ENCODE measurements at regions of chr3 and their contacts with region 1.

Region 1: DNA sequence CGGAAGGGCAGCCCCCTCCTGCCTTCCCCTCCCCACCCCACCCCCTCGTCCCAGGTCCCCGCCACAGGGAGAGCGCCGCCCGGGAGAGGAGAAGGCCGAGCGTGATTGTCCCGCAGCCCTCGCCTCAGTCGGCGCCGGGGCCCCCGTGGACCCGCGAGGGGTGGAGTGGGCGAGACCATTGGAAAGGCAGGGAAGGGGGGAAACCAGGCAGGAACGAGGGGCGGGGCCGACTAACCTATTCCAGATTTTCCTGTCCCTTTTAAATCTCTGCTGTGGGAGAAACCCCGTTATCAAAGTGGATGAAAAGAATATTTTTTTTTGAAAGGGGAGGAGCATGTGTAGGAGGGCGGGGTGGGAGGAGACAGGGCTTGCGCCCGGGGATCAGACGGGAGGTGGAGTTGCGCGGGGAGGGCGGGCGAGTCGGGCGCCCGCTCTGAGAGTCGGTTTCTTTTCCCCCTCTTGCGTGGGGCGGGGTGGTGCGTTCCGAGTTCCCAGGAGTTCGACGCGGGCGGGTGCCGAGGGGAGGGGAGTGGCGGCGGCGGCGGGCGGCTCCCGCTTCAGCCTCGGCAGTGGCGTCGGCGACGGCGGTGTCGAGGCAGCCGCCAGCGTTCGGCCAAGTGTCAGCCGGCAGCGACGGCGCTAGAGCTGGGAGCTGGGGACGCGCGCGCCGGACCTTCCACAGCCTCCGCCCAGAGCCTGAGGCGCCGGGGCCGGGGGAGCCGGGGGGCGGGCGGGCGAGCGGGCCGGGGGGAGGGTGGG is at the start of gene NECTIN3:
- DNase-seq: peak; percentile 95
- H3K4me3 Mint-ChIP-seq: peak within 1 kb of the TSS; percentile 86
- H3K27ac Mint-ChIP-seq: peak within 1 kb of the TSS; percentile 89
- H3K4me1 Mint-ChIP-seq: peaks cover 12% of the 10 kb centered on the region
- H3K27me3 Mint-ChIP-seq: no peaks in the 10 kb centered on the region
- CTCF ChIP-seq: no peak
- total RNA-seq, gene NECTIN3: 110 and 128 TPM in 2 replicates

Region 2: DNA sequence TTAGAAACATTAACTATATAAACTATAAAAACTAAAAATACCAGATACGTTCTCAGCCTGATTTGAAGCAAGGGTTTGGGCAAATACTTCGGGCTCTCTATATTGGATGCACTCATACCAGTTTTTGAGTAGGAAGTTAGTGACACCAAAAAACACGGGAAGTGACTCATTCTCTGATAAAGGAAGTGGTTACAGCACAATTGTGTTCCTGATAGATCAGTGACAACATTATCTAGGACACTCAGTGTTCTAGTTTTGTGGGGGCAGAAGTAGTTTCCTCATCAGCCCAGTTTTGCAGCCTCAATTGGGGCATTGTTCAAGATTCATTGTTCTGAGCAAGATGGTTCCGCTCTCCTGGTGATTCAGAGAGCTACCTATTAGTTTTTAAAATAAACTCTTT is 1264.5 kb before region 1 on chr3:
- CTCF ChIA-PET with region 1: no interaction called
- intact Hi-C with region 1: loop called (anchors 10 kb)
- DNase-seq: peak; percentile 48
- H3K4me3 Mint-ChIP-seq: no peak overlapping the region
- H3K27ac Mint-ChIP-seq: peak overlapping the region; percentile 94
- H3K4me1 Mint-ChIP-seq: peaks cover 33% of the 10 kb centered on the region
- H3K27me3 Mint-ChIP-seq: no peaks in the 10 kb centered on the region
- CTCF ChIP-seq: no peak

Region 3: DNA sequence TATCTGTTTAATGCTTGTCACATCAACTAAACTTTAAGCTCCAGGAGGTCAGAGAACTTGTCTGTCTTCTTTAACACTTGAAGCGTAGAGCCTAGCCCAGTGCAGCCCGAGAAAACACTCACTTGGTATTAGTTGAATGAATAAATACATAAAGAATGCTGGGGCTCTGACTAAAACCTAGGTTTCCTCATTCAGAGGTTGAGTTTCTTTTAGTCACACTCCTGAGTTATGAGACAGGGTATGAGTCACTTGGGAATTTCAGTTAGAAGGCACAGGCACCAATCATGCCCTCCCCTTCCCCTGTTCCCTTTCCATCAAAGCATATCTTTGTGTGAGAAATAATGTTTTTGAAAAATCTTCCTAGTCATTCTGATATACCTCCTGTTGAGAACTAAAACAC is 1144.3 kb before region 1 on chr3:
- CTCF ChIA-PET with region 1: no interaction called
- intact Hi-C with region 1: loop called (anchors 5 kb)
- DNase-seq: peak; percentile 58
- H3K4me3 Mint-ChIP-seq: no peak overlapping the region
- H3K27ac Mint-ChIP-seq: peak overlapping the region; percentile 97
- H3K4me1 Mint-ChIP-seq: peaks cover 80% of the 10 kb centered on the region
- H3K27me3 Mint-ChIP-seq: no peaks in the 10 kb centered on the region
- CTCF ChIP-seq: no peak

Region 4: GRCh38 chr3:110583373-110583935 is 488.0 kb before region 1 on chr3:
- CTCF ChIA-PET with region 1: interaction called, 3 read pairs
- intact Hi-C with region 1: loop called (anchors 1 kb)
- DNase-seq: peak; percentile 13
- H3K4me3 Mint-ChIP-seq: no peak overlapping the region
- H3K27ac Mint-ChIP-seq: peak overlapping the region; percentile 30
- H3K4me1 Mint-ChIP-seq: peaks cover 45% of the 10 kb centered on the region
- H3K27me3 Mint-ChIP-seq: no peaks in the 10 kb centered on the region
- CTCF ChIP-seq: no peak

Region 5: DNA sequence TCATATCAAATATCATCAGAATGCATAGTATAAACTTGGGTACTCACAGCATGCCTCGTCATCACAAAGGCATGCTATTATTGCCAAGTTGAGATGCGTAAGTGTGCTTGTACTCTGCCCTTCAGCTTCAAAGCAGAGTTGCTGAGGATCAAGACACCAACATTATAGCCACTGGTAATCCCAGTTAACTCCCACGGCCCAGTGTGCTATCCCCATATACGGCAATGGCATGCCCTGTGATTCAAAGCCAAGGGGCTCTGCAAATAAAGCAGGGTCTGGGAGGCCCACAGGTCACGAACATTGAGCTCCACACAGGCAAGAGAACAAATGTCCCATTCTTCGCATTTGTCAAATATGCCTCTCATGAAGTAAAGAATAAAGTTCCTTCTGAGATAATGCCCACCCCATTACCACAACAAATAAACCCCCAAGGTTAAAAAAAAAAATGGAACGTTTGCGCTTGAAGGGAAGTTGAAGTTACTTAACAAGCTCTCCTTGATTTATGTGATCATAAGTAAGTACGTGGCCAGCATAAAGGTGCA is 298.0 kb before region 1 on chr3:
- CTCF ChIA-PET with region 1: no interaction called
- intact Hi-C with region 1: loop called (anchors 5 kb)
- DNase-seq: peak; percentile 68
- H3K4me3 Mint-ChIP-seq: no peak overlapping the region
- H3K27ac Mint-ChIP-seq: peak overlapping the region; percentile 58
- H3K4me1 Mint-ChIP-seq: peaks cover 24% of the 10 kb centered on the region
- H3K27me3 Mint-ChIP-seq: no peaks in the 10 kb centered on the region
- CTCF ChIP-seq: no peak

Region 6: DNA sequence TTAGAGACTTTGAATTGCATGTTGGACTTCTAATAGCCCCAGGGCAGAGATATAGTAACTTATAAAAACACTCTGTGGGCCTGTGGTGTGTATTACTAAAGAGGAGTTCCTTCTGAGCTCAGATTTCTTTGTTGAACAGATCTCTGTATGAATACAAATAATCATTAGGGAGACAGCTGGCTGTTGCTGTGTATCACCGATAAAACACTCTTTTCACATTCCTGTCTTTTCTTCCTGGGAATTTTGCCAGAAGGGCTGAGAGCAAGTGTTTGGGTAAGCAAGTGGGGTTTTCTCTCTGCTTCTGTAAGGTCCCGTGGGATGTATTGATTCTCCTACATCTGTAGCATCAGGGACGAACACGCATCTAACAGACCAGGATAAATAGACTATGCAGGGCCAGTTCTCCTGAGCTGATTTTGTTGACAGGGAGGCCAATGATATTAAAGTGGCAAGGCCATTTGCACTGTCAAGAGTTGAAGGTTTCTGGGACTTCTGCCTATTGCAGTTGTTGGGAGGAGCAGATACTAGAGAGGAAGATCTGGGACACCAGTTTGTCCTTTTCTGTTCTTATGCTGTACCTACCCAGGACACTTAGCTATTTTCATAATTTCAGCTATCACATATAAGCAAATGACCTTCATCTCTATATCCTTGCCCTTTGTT is 244.6 kb after region 1 on chr3:
- CTCF ChIA-PET with region 1: no interaction called
- intact Hi-C with region 1: no loop called
- DNase-seq: no peak
- H3K4me3 Mint-ChIP-seq: no peak overlapping the region
- H3K27ac Mint-ChIP-seq: no peak overlapping the region
- H3K4me1 Mint-ChIP-seq: peaks cover 10% of the 10 kb centered on the region
- H3K27me3 Mint-ChIP-seq: no peaks in the 10 kb centered on the region
- CTCF ChIP-seq: no peak

Region 7: DNA sequence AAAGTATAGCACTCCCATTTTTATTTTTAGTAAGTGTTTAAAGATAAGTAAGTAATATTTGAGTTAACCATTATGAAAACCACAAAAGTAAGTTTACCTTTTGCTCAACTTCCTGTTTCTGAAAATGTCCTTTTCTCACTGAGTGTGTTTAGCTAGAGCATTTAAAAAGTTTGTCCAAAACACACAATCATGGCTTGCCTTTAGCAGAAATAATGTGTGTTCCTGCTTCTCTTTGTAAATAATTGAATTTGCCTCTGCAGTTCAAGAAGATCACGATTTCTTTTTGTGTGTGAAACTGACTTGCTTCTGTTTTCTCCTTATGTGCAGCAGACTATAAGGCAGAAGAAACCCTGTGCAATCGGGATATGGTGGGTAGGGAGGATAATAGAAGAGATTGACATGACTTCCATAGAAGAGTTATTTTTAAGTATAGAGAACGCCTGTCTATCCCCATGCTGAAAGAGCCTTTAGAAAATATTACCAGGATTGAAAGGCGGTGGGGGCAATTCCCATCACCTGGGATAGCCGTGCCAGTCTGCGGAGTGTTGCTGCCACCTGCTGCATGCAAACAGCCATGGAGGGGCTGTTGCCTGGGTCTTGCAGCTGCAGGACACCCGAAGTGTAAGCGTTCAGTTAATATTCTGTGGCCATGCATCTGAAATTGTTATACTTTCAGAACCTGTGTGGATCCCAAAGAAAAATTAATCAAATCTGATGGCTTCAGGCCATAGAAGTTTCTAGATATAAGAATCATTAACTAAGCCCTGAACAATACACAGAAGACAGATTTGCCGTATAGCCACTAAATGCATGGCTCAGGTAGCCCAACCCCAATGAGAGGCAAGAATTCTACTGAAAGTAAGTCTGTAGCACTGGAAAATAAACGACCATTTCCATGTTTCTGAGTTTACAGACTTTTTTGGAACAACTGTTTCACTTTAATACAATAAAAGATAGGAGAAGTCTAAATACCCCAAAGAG is 468.2 kb after region 1 on chr3:
- CTCF ChIA-PET with region 1: no interaction called
- intact Hi-C with region 1: loop called (anchors 5 kb)
- DNase-seq: peak; percentile 82
- H3K4me3 Mint-ChIP-seq: peak overlapping the region; percentile 39
- H3K27ac Mint-ChIP-seq: peak overlapping the region; percentile 11
- H3K4me1 Mint-ChIP-seq: peaks cover 32% of the 10 kb centered on the region
- H3K27me3 Mint-ChIP-seq: no peaks in the 10 kb centered on the region
- CTCF ChIP-seq: peak; percentile 74